Natural killer cell (primary cell): ENCODE measurements at regions of chr11 and their contacts with region 1.

Region 1: GRCh38 chr11:66616379-66617154 is at the start of gene RBM14:
- DNase-seq: peak; percentile 99
- ATAC-seq: peak; percentile 79 to 94 (median 86)
- H3K4me3 ChIP-seq: peak within 1 kb of the TSS; percentile 94
- H3K4me3 Mint-ChIP-seq: peak within 1 kb of the TSS; percentile 99
- H3K27ac ChIP-seq: peak within 1 kb of the TSS; percentile 95
- H3K27ac Mint-ChIP-seq: peak within 1 kb of the TSS; percentile 99 to 100
- H3K4me1 ChIP-seq: peaks cover 47% of the 10 kb centered on the region
- H3K4me1 Mint-ChIP-seq: peaks cover 45 to 46% of the 10 kb centered on the region in 2 donors
- H3K27me3 ChIP-seq: no peaks in the 10 kb centered on the region
- H3K27me3 Mint-ChIP-seq: no peaks in the 10 kb centered on the region
- CTCF ChIP-seq: no peak
- total RNA-seq, gene RBM14: 289 to 325 (median 307) TPM

Region 2: GRCh38 chr11:66545701-66546367 is 70.7 kb before region 1 on chr11 and contains the start of gene ZDHHC24:
- intact Hi-C with region 1: loop called (anchors 1 kb)
- DNase-seq: peak; percentile 84 to 92
- ATAC-seq: peak; percentile 79 to 88 (median 80)
- H3K4me3 ChIP-seq: peak within 1 kb of the TSS; percentile 78
- H3K4me3 Mint-ChIP-seq: peak within 1 kb of the TSS; percentile 91
- H3K27ac ChIP-seq: peak within 1 kb of the TSS; percentile 90
- H3K27ac Mint-ChIP-seq: peak within 1 kb of the TSS; percentile 91 to 92
- H3K4me1 ChIP-seq: peaks cover 43% of the 10 kb centered on the region
- H3K4me1 Mint-ChIP-seq: peaks cover 41 to 52% of the 10 kb centered on the region in 2 donors
- H3K27me3 ChIP-seq: no peaks in the 10 kb centered on the region
- H3K27me3 Mint-ChIP-seq: peaks cover 0 to 9% of the 10 kb centered on the region in 2 donors
- CTCF ChIP-seq: no peak
- total RNA-seq, gene ZDHHC24: 18.5 to 34.9 (median 28.9) TPM

Region 3: GRCh38 chr11:66592457-66593302 is 23.9 kb before region 1 on chr11 and contains the starts of genes CCDC87 and CCS:
- intact Hi-C with region 1: loop called (anchors 1 kb)
- DNase-seq: peak; percentile 98 to 99
- ATAC-seq: peak; percentile 96 to 97 (median 96)
- H3K4me3 ChIP-seq: peak within 1 kb of the TSS; percentile 52
- H3K4me3 Mint-ChIP-seq: peak within 1 kb of the TSS; percentile 100
- H3K27ac ChIP-seq: peak within 1 kb of the TSS; percentile 63
- H3K27ac Mint-ChIP-seq: peak within 1 kb of the TSS; percentile 98 to 100
- H3K4me1 ChIP-seq: peaks cover 20% of the 10 kb centered on the region
- H3K4me1 Mint-ChIP-seq: peaks cover 31 to 33% of the 10 kb centered on the region in 2 donors
- H3K27me3 ChIP-seq: no peaks in the 10 kb centered on the region
- H3K27me3 Mint-ChIP-seq: no peaks in the 10 kb centered on the region
- CTCF ChIP-seq: peak; percentile 72
- total RNA-seq, gene CCDC87: 0.40 to 0.68 (median 0.49) TPM
- total RNA-seq, gene CCS: 27.1 to 35.6 (median 32.4) TPM

Region 4: GRCh38 chr11:66638177-66639065 is 21.9 kb after region 1 on chr11 and contains the start of gene RBM4:
- intact Hi-C with region 1: loop called (anchors 1 kb)
- DNase-seq: peak; percentile 91 to 100
- ATAC-seq: peak; percentile 89 to 98 (median 91)
- H3K4me3 ChIP-seq: peak within 1 kb of the TSS; percentile 73
- H3K4me3 Mint-ChIP-seq: peak within 1 kb of the TSS; percentile 92
- H3K27ac ChIP-seq: peak within 1 kb of the TSS; percentile 81
- H3K27ac Mint-ChIP-seq: peak within 1 kb of the TSS; percentile 88 to 96
- H3K4me1 ChIP-seq: peaks cover 35% of the 10 kb centered on the region
- H3K4me1 Mint-ChIP-seq: peaks cover 57 to 66% of the 10 kb centered on the region in 2 donors
- H3K27me3 ChIP-seq: no peaks in the 10 kb centered on the region
- H3K27me3 Mint-ChIP-seq: no peaks in the 10 kb centered on the region
- CTCF ChIP-seq: no peak
- total RNA-seq, gene RBM4: 219 to 241 (median 224) TPM

Region 5: DNA sequence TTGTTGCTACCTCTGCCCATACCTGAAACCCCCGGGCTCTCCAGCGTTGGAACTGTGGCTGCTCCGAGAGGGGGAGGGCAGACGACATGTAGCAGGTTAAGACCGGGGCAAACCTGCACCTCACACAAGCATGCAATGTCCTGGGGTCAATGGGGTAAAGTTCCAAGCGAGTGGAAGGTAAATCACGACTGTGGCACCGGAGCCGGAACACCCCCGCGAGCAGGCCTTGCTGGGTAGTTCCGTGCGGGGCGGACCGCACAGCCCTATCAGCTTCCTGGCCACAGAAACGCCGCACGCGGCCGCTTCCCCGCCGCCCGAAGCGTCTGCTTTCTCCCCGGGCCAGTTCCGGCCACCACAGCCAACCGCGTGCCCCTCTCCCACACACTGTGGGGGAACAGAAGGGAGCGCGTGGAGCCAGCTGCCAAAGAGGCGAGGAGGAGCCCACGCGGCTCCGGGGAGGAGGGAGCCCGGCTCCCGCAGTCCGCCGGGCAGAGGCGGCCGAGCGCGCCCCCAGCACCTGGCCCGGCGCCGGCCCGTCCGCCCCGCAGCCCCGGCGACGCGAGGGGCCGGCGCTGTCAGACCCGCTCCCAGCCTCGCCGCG is 110.8 kb after region 1 on chr11:
- intact Hi-C with region 1: no loop called
- DNase-seq: peak; percentile 27 to 46
- ATAC-seq: peak; percentile 39 to 63 (median 61)
- H3K4me3 ChIP-seq: peak overlapping the region; percentile 33
- H3K4me3 Mint-ChIP-seq: peak overlapping the region; percentile 66
- H3K27ac ChIP-seq: no peak overlapping the region
- H3K27ac Mint-ChIP-seq: no peak overlapping the region
- H3K4me1 ChIP-seq: peaks cover 13% of the 10 kb centered on the region
- H3K4me1 Mint-ChIP-seq: peaks cover 11 to 19% of the 10 kb centered on the region in 2 donors
- H3K27me3 ChIP-seq: peaks cover 40% of the 10 kb centered on the region
- H3K27me3 Mint-ChIP-seq: peaks cover 48 to 50% of the 10 kb centered on the region in 2 donors
- CTCF ChIP-seq: no peak